HCT116 (cell line): ENCODE measurements at regions of chr11 and their contacts with region 1.

Region 1: DNA sequence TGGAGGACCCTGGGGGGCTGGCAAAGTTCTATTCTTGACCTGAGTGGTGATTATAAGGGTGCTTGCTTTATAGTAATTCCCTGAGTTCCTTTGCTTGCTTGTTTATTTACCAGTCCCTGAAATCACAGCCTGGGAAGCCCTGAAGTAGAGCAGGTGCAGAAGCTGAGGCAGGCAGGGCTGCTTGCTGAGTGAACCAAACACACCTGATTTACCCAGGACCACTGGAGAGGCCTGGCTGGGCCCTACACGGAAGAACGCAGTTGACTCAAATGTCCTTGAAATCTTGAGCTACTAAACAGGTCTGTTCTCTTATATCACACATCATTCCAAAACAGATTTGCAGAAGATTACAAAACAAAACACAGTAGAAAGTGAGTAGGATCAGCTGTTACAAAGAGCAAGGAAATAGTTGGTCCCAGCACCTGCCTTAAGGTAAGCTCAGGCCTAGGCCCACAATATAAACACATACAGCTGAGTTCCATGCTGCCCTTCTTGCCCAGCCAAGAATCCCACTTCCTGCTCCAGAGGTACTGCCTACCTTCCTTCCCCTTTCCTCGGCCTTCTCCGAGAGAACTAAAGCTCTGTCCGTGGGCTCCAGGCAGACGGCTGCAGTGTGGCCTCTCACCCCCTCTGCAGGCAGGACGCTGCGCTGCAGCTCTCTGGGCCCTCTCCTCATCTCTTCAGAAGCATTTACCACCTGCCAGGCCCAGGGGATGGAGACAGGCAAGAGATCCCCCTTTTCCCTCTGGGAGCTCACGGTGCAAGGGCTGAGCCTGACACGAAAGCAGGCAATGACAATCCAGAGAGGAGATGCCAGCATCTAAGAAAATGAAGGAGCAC is 46.1 kb upstream of the SCUBE2 start:
- DNase-seq: peak; percentile 36
- ATAC-seq: peak; percentile 90
- H3K4me3 ChIP-seq: no peak overlapping the region
- H3K27ac ChIP-seq: no peak overlapping the region; the same call in 1 of the 2 replicates
- H3K4me1 ChIP-seq: peaks cover 33 to 35% of the 10 kb centered on the region in 2 experiments
- H3K27me3 ChIP-seq: no peaks in the 10 kb centered on the region
- CTCF ChIP-seq: peak; percentile 73 to 97 (median 91)
- POLR2A ChIP-seq: no peak
- RAD21 ChIP-seq: peak; percentile 88

Region 2: GRCh38 chr11:8911029-8911826 is 226.3 kb before region 1 on chr11 and contains the start of gene AKIP1:
- CTCF ChIA-PET with region 1: interaction called, 10 read pairs
- POLR2A ChIA-PET with region 1: no interaction called
- RAD21 ChIA-PET with region 1: no interaction called
- intact Hi-C with region 1: loop called (anchors 2 kb)
- DNase-seq: peak; percentile 83
- ATAC-seq: peak; percentile 95
- H3K4me3 ChIP-seq: peak within 1 kb of the TSS; percentile 86 to 91
- H3K27ac ChIP-seq: peak within 1 kb of the TSS; percentile 74
- H3K4me1 ChIP-seq: peaks cover 3 to 14% of the 10 kb centered on the region in 2 experiments
- H3K27me3 ChIP-seq: no peaks in the 10 kb centered on the region
- CTCF ChIP-seq: no peak
- POLR2A ChIP-seq: peak; percentile 30
- RAD21 ChIP-seq: no peak
- total RNA-seq, gene AKIP1: 30.3 TPM

Region 3: DNA sequence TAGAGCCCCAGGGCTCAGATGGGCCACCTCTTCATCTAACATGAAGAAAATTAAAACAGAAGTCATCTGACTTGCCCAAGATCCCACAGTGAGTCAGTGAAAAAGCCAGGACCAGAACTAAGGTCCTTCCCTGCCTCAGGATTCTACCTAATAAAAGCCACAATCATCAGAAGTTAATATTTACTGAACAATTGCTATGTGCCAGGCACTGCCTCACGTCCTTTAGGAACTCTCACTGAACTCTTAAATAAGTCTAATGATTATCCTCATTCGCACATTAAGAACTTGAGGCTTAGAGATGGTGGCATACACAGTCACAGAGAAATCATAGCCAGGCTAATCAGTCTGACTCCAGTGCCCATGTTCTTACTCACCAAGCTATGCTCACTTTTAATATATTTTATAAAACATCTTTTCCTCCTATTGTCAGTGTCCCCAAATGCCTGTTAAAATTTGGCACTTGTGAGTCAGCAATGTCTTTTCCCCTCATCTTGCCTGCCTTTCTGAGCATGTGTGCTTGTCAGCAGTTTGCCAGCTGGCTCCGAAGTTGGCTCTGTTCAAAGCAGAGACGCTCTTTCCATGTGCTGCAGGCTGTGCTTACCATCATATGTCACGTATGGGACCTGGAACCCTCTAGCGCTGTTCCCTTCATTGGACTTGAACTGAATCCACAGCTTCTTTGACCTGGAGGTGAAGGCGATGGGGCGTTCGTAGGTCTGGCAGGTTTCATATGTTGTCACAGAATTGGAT is 112.2 kb before region 1 on chr11:
- CTCF ChIA-PET with region 1: no interaction called
- POLR2A ChIA-PET with region 1: no interaction called
- RAD21 ChIA-PET with region 1: no interaction called
- intact Hi-C with region 1: no loop called
- DNase-seq: no peak
- ATAC-seq: no peak
- H3K4me3 ChIP-seq: no peak overlapping the region
- H3K27ac ChIP-seq: no peak overlapping the region
- H3K4me1 ChIP-seq: peaks cover 0 to 6% of the 10 kb centered on the region in 2 experiments; a peak in 1 of 4 replicates
- H3K27me3 ChIP-seq: peaks cover 5% of the 10 kb centered on the region; the same call in 1 of the 2 replicates
- CTCF ChIP-seq: no peak
- POLR2A ChIP-seq: no peak
- RAD21 ChIP-seq: no peak